Lower lobe of right lung (tissue), 2 donors: ENCODE measurements at regions of chr22 and their contacts with region 1.

Region 1: DNA sequence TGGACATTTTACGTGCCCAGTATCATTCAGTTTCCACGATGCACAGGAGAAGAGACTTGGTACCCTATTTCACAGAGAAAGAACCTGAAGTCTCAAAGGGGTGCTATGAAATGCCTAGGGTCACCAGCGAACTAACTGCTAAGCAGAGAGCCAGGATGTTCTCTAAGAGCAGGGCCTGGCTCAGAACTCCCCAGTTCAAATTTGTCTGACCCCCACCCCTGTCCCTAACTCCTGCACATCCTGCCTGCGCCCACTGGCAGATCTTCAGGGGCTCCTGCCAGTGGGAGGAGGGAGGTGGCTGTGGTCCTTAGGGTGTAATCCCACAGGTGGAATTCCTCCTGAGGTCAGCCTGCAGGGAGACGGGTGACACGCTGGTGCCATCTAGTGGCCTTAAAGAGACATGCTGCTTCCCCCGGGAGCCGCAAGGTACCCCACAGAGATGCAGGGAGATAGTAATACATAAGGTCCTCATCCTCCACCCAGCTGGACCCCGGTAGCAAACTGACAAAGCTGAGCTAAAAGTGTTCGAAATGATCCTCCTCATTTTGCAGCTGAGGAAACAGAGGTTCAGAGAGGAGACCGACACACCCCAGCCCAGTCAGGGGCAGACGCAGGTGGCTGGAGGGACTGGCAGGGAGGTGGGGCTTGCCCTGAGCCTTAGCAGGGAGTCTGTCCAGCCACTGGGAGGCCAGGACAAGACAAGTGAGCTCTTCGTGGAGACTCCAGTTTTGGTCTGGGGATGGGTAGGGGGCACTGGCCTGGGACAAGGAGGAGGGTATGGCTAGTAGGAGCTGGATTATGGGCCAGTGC is 34.1 kb downstream of the MB start:
- DNase-seq: peak; percentile 70
- ATAC-seq: peak; percentile 80 to 85
- H3K4me3 ChIP-seq: no peak overlapping the region
- H3K27ac ChIP-seq: no peak overlapping the region
- H3K4me1 ChIP-seq: peaks cover 12% of the 10 kb centered on the region
- H3K27me3 ChIP-seq: no peaks in the 10 kb centered on the region
- CTCF ChIP-seq: peak; percentile 92

Region 2: GRCh38 chr22:35430897-35431322 is 152.2 kb before region 1 on chr22:
- intact Hi-C with region 1: loop called (anchors 10 kb)
- DNase-seq: peak; percentile 87
- ATAC-seq: peak; percentile 97 to 98
- H3K4me3 ChIP-seq: no peak overlapping the region
- H3K27ac ChIP-seq: no peak overlapping the region
- H3K4me1 ChIP-seq: peaks cover 15% of the 10 kb centered on the region
- H3K27me3 ChIP-seq: no peaks in the 10 kb centered on the region
- CTCF ChIP-seq: peak; percentile 95

Region 3: GRCh38 chr22:35622191-35622913 is 39.3 kb after region 1 on chr22:
- intact Hi-C with region 1: no loop called
- DNase-seq: peak; percentile 60
- ATAC-seq: peak in 1 of 2 donors; percentile 12
- H3K4me3 ChIP-seq: no peak overlapping the region
- H3K27ac ChIP-seq: no peak overlapping the region
- H3K4me1 ChIP-seq: peaks cover 6% of the 10 kb centered on the region
- H3K27me3 ChIP-seq: no peaks in the 10 kb centered on the region
- CTCF ChIP-seq: no peak